ENCODE measurements at regions of chr12 and their contacts with region 1.

Region 1: GRCh38 chr12:71663561-71664294 is at the start of gene ZFC3H1:
- DNase-seq: peak in 1 of 2 donors; percentile 99
- H3K4me3 ChIP-seq: peak within 1 kb of the TSS; percentile 82 to 96
- H3K27ac ChIP-seq: peak within 1 kb of the TSS; percentile 94
- H3K4me1 ChIP-seq: peaks cover 42% of the 10 kb centered on the region
- H3K27me3 ChIP-seq: no peaks in the 10 kb centered on the region
- CTCF ChIP-seq: no peak
- POLR2A ChIP-seq: peak in 1 of 2 donors; percentile 93
- total RNA-seq, gene ZFC3H1: 121 TPM

Region 2: DNA sequence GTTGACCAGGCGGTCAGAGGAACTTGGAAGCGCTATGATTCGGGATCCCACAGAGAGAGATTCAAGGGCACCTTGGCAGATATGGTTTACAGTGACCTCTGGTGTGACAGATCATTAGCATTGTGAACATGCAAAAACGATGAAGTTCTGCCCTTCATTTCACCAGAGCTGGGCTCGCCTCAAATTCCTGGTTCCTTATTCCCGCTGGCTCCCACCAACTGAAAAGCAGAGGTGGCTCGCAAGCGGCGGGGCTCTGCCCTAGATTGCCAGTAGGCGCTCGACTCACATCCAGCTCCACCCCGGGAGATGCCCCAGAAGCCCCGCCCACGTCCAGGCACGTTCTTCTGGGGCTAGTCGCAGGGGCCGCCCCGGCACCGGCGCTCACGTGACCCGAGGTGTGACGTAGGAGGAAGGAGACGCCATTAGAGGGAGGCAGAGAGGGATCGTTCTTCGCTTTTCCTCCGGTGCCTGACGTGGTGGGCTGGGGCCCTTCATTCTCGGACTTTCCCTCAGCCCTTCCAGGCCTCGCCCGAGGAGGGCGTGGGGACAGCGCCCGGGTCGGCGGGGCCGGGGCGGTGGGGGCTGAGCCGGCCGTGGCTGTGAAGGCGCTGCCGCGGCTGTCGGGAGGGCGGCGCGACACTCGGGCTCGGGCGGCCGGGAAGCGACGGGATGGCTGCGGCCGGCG is 90.9 kb after region 1 on chr12 and contains the start of gene RAB21:
- intact Hi-C with region 1: loop called (anchors 10 kb)
- DNase-seq: peak; percentile 98 to 99
- H3K4me3 ChIP-seq: peak within 1 kb of the TSS; percentile 79 to 87
- H3K27ac ChIP-seq: peak within 1 kb of the TSS; percentile 92
- H3K4me1 ChIP-seq: peaks cover 39% of the 10 kb centered on the region
- H3K27me3 ChIP-seq: no peaks in the 10 kb centered on the region
- CTCF ChIP-seq: peak in 1 of 3 experiments; percentile 22
- POLR2A ChIP-seq: peak in 1 of 2 donors; percentile 91
- total RNA-seq, gene RAB21: 21.1 TPM

Measured in vagina (tissue), 2 donors.